Activated CD4-positive, alpha-beta memory T cell treated with anti-CD3 and anti-CD28 coated beads for 36 hours (primary cell): ENCODE measurements at regions of chr11 and their contacts with region 1.

Region 1: DNA sequence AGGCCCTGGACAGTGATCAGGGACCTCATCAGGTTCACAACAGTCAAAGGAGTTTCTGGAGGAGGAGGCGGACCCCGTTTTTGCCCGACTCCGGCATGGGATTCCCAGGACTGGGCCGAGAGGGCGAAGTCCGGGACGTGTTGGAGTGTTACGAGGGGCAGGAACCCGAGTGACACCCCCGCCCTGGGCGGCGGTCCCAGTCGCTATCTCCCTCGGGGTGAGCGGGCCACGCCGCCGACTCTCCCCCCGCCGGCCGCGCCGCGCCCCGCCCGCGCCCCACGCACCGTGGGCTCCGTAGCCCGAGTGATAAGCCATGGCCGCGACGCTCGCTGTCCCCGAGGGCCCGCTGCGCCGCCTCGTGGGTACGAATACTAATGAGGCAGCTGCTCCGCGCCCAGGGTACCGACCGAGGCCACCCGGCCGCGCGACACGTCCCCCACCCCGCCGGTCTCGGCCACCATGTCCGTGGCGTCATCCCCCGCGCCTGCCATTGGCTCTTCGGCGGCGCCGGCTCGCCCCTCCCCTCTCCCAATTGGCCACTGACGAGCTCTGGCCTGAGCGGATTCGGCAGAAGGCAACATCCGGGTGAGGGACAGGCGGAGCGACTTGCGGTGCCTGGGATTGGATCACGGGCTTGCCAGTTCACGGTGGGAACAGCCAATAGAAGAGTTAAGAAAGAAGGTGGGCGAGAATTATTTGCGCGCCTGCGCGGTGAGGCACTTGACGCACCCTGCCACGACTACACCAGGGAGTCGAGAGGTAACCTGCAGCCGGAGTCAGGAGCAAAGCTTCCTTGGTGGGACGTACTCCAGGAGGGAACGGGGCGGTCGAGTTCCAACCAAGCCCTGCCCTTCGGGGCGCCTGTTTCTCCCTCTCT is at the start of gene YIF1A:
- DNase-seq: peak; percentile 99
- H3K4me3 Mint-ChIP-seq: peak within 1 kb of the TSS; percentile 87
- H3K27ac Mint-ChIP-seq: peak within 1 kb of the TSS; percentile 91
- H3K4me1 Mint-ChIP-seq: peaks cover 33% of the 10 kb centered on the region
- H3K27me3 Mint-ChIP-seq: peaks cover 12% of the 10 kb centered on the region
- total RNA-seq, gene YIF1A: 63.1 to 65.8 TPM

Region 2: DNA sequence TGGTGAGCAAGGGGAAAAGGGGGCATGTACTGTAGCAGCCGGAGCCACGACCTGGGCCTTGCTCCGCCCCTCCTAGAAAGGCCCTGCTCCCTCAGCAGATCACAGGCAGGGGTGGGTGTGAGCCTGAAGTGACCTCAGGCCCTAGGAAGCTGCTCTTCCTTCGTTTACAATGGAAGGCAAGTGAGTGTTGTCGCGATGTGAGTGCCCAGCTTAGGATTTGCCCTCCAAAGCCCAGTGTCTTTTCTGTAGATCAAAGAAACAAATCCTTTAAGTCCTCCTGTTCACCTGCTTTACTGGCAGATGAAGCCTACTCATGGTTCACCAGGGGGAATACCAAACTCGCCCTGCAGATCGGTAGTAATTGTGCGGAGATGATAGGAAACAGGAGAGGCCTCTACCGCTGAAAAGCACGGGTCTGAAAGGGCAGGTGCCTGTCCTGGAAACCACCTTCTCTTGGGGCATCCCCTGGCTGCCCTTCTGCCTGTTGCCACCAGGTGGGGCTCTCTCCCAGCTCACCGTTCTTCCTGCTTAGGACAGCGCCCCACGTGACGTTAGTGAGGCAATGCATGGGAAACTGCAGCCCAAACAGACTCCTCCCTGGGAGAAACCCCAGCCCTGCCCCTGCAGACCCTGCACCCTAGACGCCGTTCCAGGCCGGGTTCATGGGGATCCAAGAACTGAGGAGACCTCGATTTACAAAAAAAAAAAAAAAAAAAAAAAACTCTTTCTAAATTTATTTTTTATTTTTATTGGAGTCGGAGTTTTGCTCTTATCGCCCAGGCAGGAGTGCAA is 66.4 kb before region 1 on chr11:
- CTCF ChIA-PET with region 1: interaction called, 11 read pairs
- POLR2A ChIA-PET with region 1: no interaction called
- intact Hi-C with region 1: no loop called
- DNase-seq: peak; percentile 97
- H3K4me3 Mint-ChIP-seq: peak overlapping the region; percentile 47
- H3K27ac Mint-ChIP-seq: peak overlapping the region; percentile 100
- H3K4me1 Mint-ChIP-seq: peaks cover 21% of the 10 kb centered on the region
- H3K27me3 Mint-ChIP-seq: no peaks in the 10 kb centered on the region

Region 3: GRCh38 chr11:66421492-66422205 is 132.7 kb after region 1 on chr11:
- CTCF ChIA-PET with region 1: no interaction called
- POLR2A ChIA-PET with region 1: interaction called, 4 read pairs
- intact Hi-C with region 1: loop called (anchors 1 kb)
- DNase-seq: peak; percentile 92
- H3K4me3 Mint-ChIP-seq: no peak overlapping the region
- H3K27ac Mint-ChIP-seq: no peak overlapping the region
- H3K4me1 Mint-ChIP-seq: peaks cover 27% of the 10 kb centered on the region
- H3K27me3 Mint-ChIP-seq: peaks cover 26% of the 10 kb centered on the region